Common myeloid progenitor, CD34-positive (primary cell): ENCODE measurements at regions of chr10 and their contacts with region 1.

Region 1: DNA sequence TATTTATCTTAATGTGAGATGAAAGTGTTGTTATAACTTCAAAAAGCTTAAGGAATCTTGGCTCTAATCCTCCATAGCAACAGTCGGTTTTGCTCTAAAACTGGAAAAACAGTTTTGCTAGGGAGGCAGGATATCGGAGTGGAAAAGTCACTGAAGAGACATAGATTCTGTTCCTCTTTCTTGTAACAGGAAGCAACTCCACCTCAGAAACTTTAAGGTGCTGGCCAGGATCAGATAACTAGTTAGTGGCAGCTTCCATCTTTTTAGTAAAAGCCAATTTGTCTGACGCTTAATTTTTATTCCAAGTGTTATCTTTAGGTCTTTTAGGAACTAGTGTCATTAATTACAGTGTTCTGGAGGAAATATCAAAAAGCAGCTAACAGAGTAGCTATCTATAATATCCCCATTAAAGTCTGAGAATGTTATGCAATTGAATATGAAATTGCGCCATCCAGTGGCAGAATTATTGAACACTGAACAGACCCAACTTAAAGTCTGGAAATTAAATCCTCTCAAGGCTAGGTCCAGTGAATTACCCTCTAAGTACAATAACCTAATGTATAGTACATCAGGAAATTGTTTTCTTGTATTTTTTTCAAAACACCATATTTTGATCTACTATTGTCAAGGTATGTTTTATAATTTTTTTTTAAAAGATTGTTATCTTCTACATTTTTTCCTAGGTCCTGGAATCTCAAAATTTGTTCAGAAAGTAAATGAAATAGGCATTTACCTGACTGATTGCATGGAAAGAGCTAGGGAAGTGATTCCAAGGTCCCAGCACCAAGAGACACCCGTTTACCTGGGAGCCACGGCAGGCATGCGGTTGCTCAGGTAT is 65.9 kb upstream of the CC2D2B start:
- DNase-seq: peak; percentile 70 to 85 (median 76)
- H3K4me3 ChIP-seq: peak overlapping the region in 2 of 7 experiments; percentile 10 to 43
- H3K27ac ChIP-seq: peak overlapping the region in 1 of 2 experiments; percentile 65
- H3K4me1 ChIP-seq: peaks cover 0 to 13% (median 8%) of the 10 kb centered on the region in 4 experiments
- H3K27me3 ChIP-seq: no peaks in the 10 kb centered on the region

Region 2: GRCh38 chr10:95474228-95475002 is 367.5 kb before region 1 on chr10:
- CTCF ChIA-PET with region 1: no interaction called
- POLR2A ChIA-PET with region 1: no interaction called
- DNase-seq: no peak
- H3K4me3 ChIP-seq: no peak overlapping the region
- H3K27ac ChIP-seq: no peak overlapping the region
- H3K4me1 ChIP-seq: no peaks in the 10 kb centered on the region
- H3K27me3 ChIP-seq: no peaks in the 10 kb centered on the region

Region 3: GRCh38 chr10:95818668-95819067 is 23.2 kb before region 1 on chr10:
- CTCF ChIA-PET with region 1: interaction called, 15 read pairs
- POLR2A ChIA-PET with region 1: no interaction called
- DNase-seq: no peak
- H3K4me3 ChIP-seq: no peak overlapping the region
- H3K27ac ChIP-seq: no peak overlapping the region
- H3K4me1 ChIP-seq: peaks cover 0 to 17% (median 4%) of the 10 kb centered on the region in 4 experiments
- H3K27me3 ChIP-seq: no peaks in the 10 kb centered on the region

Region 4: DNA sequence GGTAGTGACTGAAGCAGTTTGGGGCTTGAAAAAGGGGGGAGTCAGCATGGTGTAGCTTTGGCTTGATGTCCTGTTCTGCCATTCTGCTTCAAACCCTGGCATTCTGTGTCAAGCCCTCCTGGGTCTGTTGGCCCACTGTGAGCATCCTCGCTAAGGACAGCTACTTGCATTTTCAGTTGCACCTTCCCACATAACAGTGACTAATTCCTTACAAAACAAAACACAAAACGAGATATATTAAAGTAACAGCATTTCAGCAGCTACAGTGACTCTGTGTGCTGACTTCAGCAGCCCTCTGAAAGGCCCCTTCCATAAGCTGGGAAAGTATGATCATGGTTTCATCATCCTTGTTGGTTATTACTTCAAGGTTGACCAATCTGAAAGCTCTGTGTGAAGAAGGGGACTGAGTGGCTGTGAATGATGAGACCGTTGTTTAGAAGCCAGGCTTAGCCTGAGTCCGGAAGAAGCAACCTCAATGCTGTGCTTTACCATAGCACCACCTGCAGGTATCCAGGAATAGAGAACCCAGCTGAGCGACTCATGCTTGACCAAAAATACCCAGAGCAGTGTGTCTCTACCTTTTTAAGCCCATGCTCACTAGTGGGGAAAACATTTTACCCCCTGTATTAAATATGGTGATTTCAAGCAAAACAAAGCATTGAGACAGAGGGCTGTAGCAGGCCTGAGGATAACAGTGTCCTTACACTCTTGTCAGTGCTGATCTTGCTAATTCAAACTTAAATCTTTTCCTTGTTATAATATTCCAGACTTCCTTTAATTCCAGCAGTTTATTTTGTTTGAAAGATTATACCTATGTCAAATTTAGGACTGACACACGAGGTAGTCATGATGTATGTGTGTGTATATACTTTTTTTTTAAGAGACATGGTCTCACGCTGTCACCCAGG is 23.3 kb after region 1 on chr10:
- CTCF ChIA-PET with region 1: interaction called, 60 read pairs
- POLR2A ChIA-PET with region 1: no interaction called
- DNase-seq: peak; percentile 63 to 87 (median 84)
- H3K4me3 ChIP-seq: no peak overlapping the region
- H3K27ac ChIP-seq: no peak overlapping the region
- H3K4me1 ChIP-seq: peaks cover 0 to 14% (median 0%) of the 10 kb centered on the region in 4 experiments
- H3K27me3 ChIP-seq: no peaks in the 10 kb centered on the region